ENCODE measurements at regions of chr2 and their contacts with region 1.

Region 1: GRCh38 chr2:181715033-181715630 is 34.8 kb upstream of the NEUROD1 start:
- H3K4me3 ChIP-seq: no peak overlapping the region
- H3K27ac ChIP-seq: no peak overlapping the region
- H3K4me1 ChIP-seq: no peaks in the 10 kb centered on the region
- CTCF ChIP-seq: peak; percentile 72

Region 2: DNA sequence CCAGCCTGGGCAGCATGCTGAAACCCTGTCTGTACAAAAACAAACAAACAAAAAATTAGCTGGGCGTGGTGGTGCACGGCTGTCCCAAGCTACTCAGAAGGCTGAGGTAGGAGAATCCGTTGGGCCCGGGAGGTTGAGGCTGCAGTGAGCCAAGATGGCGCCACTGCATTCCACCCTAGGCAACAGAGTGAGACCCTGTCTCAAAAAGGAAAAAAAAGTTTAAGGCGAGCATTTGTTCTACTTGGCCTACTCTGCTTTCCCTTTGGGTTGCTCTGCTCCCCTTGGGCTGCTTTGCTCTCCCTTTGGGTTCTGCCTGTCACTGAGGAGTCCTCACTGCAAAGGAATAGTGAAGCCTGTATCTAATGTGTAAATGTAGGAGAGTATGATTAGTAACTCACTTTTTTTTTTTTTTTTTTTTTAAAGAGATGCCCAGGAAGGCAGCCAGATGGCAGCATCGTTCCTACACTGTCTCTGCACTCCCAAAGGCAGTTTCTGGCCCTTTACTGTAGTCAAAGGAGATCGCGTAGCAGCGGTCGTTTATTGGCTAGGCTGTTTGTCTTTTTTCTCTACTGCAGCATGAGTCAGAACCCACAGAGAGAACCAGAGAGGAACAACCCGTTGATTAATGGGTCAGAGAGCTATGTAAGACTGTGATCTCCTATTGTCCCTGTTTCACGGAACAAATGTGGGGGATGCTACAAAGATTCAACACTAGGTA is 1589.7 kb before region 1 on chr2:
- CTCF ChIA-PET with region 1: interaction called, 27 read pairs
- POLR2A ChIA-PET with region 1: no interaction called
- H3K4me3 ChIP-seq: no peak overlapping the region
- H3K27ac ChIP-seq: no peak overlapping the region; the same call in 1 of the 2 replicates
- H3K4me1 ChIP-seq: peaks cover 7% of the 10 kb centered on the region
- CTCF ChIP-seq: no peak; the same call in none of the 2 replicates

Region 3: DNA sequence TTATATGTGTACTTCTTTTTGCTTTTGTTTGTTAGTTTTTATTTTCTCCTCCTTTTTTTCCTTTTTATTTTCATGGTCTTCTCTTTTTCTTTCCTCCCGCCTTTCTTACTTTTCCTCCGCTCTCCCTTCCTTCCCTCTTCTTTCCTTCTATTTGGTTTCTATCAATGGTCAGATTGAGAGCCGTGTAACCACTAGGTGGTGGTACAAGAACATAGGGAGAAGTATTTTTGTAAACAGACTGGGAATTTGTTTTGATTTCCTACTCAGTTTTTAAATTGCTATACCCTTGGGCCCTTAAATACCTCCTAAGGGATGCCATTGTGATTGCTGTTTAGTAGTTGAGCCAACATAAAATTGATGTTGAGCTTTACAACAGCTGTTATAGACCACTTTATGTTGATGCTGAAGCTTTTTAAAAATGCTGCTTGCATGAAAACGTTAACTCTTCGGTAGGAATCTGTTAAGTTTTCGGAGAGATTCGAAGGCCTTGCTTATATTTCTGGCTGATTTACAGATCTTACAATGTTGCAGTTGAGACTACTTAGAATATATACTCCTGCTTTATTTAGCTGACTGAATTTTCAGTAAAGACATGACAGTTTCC is 610.5 kb before region 1 on chr2:
- CTCF ChIA-PET with region 1: interaction called, 14 read pairs
- POLR2A ChIA-PET with region 1: no interaction called
- H3K4me3 ChIP-seq: no peak overlapping the region
- H3K27ac ChIP-seq: no peak overlapping the region
- H3K4me1 ChIP-seq: peaks cover 3% of the 10 kb centered on the region; the same call in 1 of the 2 replicates
- CTCF ChIP-seq: peak; percentile 83

Region 4: DNA sequence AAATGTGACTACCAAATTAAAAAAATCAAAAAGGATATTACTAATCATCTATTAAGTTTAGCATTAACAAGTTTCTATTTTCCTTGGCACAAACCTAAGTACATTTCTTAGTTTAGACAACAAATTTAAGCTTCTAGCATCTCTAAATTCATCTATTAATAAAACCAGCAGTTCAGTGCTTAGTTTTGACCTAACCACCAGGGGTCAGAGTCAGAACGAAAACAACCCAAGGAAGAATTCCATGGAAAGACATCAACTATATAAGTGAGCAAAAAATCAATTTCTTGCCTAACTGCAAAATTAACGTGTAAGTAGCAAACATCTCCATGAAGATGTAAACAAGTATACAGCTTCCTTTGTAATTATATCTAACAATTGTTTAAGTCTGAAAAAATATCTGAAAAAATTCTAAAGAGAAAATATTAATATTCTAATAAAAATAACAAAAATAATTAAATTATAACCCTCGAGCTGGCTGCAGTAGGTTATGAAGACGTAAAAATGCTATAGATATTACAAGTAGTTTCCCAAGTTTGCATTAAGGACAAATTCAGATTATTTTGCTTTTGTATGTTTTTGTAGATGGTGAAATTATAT is 141.9 kb before region 1 on chr2:
- CTCF ChIA-PET with region 1: interaction called, 98 read pairs
- POLR2A ChIA-PET with region 1: no interaction called
- H3K4me3 ChIP-seq: no peak overlapping the region
- H3K27ac ChIP-seq: no peak overlapping the region
- H3K4me1 ChIP-seq: peaks cover 14% of the 10 kb centered on the region
- CTCF ChIP-seq: peak; percentile 28; the same call in 1 of the 2 replicates

Measured in HEK293 (cell line).